ENCODE measurements at regions of chr14 and their contacts with region 1.

Region 1: DNA sequence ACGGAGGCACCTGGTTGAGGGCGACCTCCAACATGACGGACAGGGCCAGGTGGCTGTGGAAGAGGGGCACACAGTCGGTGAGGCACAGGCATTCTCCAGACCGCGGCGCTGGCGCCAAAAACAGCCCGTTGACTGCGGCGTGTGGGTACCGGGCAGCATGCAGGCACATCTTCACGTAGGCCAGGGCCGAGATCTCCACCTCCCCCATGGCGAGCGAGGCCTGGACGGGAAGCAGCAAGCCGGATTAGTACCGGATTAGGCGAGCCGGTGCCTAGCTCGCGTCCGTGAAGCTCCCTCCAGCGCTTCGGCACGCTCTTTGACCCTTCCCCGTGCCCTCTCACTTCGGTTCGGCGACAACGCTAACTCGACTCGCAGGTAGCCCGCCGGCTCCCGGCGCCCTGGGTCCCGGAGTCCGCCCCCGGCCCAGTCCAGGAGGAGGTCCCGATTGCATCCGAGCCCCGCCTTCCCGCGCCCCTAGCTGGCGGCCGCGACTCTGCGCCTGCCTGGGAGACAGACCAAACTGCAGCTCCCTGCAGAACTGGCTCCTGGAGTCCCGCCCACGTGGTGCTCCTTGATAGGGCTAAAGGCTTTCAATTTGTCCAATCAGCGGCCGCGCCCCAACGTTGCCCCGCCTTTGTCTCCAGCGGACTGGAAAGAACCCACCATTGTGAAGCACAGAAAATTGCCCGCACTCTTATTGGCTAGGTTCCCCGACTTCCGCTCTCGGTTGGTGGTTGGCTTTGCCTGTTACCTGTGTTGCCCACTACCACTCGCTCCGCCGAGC is at the start of gene EMC9:
- DNase-seq: peak; percentile 100
- H3K4me3 ChIP-seq: peak within 1 kb of the TSS; percentile 85
- H3K27ac ChIP-seq: peak within 1 kb of the TSS; percentile 81
- H3K4me1 ChIP-seq: peaks cover 44% of the 10 kb centered on the region
- CTCF ChIP-seq: peak; percentile 51
- total RNA-seq, gene EMC9: 73.2 and 74.8 TPM in 2 replicates

Region 2: GRCh38 chr14:23605931-23606585 is 535.2 kb before region 1 on chr14:
- CTCF ChIA-PET with region 1: no interaction called
- POLR2A ChIA-PET with region 1: no interaction called
- intact Hi-C with region 1: no loop called
- DNase-seq: no peak
- H3K4me3 ChIP-seq: no peak overlapping the region
- H3K27ac ChIP-seq: no peak overlapping the region
- H3K4me1 ChIP-seq: no peaks in the 10 kb centered on the region
- CTCF ChIP-seq: no peak

Region 3: GRCh38 chr14:23881282-23881681 is 260.0 kb before region 1 on chr14:
- CTCF ChIA-PET with region 1: no interaction called
- POLR2A ChIA-PET with region 1: no interaction called
- intact Hi-C with region 1: no loop called
- DNase-seq: no peak
- H3K4me3 ChIP-seq: no peak overlapping the region
- H3K27ac ChIP-seq: no peak overlapping the region
- H3K4me1 ChIP-seq: no peaks in the 10 kb centered on the region
- CTCF ChIP-seq: no peak

Region 4: GRCh38 chr14:24013654-24014514 is 127.4 kb before region 1 on chr14:
- CTCF ChIA-PET with region 1: no interaction called
- POLR2A ChIA-PET with region 1: no interaction called
- intact Hi-C with region 1: no loop called
- DNase-seq: peak; percentile 82
- H3K4me3 ChIP-seq: no peak overlapping the region
- H3K27ac ChIP-seq: no peak overlapping the region
- H3K4me1 ChIP-seq: peaks cover 12% of the 10 kb centered on the region
- CTCF ChIP-seq: peak; percentile 90

Region 5: DNA sequence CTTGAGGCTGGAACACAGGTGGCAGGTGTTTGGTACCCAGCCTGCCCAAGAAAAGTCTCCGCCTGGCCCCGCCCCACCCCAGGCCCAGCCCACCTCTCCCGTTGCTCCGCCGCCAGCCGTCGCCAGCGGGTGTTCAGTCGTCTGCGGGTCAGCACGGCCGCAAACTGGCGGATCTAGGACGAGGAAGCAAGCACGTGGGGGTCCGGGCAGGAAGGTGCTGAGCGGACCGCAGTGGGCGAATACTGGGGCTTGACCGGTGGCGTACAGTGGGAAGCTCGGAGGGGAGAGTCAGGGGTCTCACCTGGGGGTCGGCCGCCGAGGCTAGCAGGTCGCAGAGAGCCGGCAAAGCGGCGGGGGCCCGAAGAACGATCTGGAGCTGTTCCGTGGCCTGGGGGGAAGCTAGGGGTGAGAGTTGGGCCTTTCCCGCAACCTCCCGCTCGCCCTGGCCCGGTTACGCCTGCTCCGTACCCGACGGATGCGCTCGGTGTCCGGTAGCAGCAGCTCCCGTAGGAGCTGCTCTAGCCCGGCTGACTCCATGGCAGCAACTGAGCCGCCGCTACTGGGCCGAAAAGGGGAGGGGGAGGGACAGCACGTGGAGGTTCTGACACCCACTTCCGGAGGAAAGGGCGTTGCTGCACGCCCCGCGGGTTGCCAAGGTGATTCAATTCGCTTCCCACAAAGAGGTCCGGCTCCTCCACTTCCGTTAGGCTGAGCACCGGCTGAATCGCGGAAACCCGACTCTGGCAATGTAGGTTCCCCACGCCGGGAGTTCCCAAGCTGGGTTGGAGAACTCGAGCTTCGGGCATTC is 47.2 kb after region 1 on chr14 and contains the start of gene IPO4:
- CTCF ChIA-PET with region 1: no interaction called
- POLR2A ChIA-PET with region 1: no interaction called
- intact Hi-C with region 1: loop called (anchors 2 kb)
- DNase-seq: peak; percentile 97
- H3K4me3 ChIP-seq: peak within 1 kb of the TSS; percentile 85
- H3K27ac ChIP-seq: peak within 1 kb of the TSS; percentile 26
- H3K4me1 ChIP-seq: peaks cover 16% of the 10 kb centered on the region
- CTCF ChIP-seq: no peak
- total RNA-seq, gene IPO4: 48.4 and 59.2 TPM in 2 replicates

Region 6: GRCh38 chr14:24351517-24351916 is 210.2 kb after region 1 on chr14:
- CTCF ChIA-PET with region 1: no interaction called
- POLR2A ChIA-PET with region 1: no interaction called
- intact Hi-C with region 1: no loop called
- DNase-seq: no peak
- H3K4me3 ChIP-seq: no peak overlapping the region
- H3K27ac ChIP-seq: no peak overlapping the region
- H3K4me1 ChIP-seq: no peaks in the 10 kb centered on the region
- CTCF ChIP-seq: 0 out of 2 replicates have a peak, but pooled peaks have one; percentile 25

Measured in OCI-LY7 (cell line).